ENCODE measurements at regions of chr1 and their contacts with region 1.

Region 1: DNA sequence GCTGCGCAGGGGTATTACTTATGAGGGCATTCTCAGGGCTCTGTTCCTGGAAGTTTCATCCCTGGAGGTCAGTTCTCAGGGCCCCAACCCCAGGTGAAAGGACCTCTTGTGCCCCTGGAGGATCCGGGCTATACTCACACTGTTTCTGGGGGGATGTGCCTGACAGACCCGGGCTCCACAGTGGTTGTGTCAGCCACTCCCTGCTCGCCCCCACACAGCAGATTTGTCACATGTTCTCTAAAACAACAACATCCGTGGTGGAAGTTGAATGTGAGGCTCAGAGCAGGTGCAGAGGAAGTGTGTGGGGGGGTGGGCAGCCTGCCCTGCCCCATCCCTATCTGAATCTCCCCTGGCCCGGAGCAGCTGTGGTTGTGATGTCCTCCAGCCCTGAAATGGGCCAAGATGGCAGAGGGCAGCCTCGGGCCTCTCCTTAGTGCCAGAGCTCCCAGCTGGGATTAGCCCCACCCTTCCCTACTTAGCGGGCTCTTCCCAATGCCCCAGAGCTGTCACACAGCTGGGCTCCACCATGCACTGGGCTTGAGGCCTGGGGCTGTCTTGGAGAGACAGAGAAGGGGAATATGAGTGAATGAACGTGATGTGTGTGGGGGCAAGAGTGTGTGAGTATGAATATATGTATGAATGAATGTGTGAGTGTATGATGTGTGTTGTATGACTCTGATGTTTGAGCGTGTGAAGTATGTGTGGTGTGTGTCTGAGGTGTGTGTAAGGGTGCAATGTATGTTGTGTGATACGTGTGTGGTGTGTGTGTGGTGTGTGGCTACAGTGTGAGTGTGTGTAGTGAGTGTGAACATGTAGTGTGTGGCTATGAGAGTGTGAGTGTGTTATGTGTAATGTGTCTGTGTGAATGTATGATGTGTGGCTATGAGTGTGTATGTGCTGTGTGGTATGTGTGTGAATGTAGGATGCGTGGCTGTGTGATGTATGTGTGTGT is 1.5 kb upstream of the FCMR start:
- DNase-seq: peak; percentile 49
- H3K4me3 Mint-ChIP-seq: no peak overlapping the region
- H3K27ac Mint-ChIP-seq: no peak overlapping the region
- H3K4me1 Mint-ChIP-seq: peaks cover 30% of the 10 kb centered on the region
- H3K27me3 Mint-ChIP-seq: no peaks in the 10 kb centered on the region

Region 2: DNA sequence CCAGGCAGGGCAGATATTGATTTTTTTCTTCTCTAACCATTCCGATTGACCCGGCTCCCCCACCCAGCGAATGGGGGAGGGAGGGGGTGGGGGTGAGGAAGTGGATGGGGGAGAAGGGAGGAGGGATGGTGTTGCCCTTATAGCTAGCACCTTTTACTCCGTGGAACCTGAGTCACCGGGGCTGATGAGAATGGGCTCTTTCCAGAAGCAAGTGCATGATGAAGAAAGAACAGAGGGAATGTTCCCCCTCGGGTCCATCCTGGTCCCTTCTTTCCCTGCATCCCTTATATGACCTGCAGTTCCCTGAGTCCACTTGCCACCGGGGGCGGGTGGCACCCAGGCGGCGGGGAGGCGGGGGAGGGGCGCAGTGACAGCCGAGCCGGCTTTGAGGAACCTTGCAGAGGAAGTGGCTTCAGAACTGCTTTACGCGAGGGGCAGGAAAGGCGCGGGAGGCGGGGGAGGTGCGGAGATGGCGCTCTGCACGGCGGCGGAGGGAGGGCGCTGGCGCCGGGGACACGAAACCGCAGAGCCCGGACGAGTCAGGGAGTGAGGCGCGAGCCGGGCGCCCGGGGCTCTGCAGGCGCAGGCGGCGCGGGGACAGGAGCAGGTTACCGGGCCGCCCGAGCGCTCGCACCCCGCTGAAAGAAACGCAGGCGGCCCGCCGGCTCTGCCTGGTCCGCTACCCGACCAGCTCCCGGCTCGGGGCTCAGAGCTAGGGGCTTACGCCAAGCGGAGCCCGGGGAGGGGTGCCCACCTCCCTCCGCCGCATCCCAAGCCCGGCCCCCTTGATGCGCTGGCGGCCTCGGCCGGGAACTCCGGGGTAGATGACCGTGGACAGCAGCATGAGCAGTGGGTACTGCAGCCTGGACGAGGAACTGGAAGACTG is 366.3 kb before region 1 on chr1:
- intact Hi-C with region 1: no loop called
- DNase-seq: peak; percentile 89
- H3K4me3 Mint-ChIP-seq: peak overlapping the region; percentile 97
- H3K27ac Mint-ChIP-seq: peak overlapping the region; percentile 95
- H3K4me1 Mint-ChIP-seq: peaks cover 65% of the 10 kb centered on the region
- H3K27me3 Mint-ChIP-seq: no peaks in the 10 kb centered on the region

Region 3: DNA sequence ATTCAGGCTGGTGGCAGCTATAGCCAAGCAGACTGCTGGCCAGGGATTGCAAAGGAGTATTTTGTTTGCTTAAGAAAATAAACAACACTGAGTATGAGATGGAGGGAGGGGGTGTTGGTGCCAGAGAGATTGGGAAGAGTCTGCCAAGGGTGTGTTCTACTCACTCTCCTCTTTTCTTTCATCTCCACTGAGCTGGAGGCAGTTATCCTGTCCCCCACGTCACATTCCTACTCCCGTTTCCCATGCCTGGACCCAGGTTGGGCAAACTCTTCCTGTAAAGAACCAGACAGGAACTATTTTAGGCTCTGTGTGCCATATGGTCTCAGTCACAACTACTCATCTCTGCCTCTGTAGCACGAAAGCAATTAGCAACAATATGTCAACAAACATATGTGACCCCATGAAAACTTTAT is 27.4 kb before region 1 on chr1:
- intact Hi-C with region 1: loop called (anchors 2 kb)
- DNase-seq: no peak
- H3K4me3 Mint-ChIP-seq: no peak overlapping the region
- H3K27ac Mint-ChIP-seq: no peak overlapping the region
- H3K4me1 Mint-ChIP-seq: peaks cover 56% of the 10 kb centered on the region
- H3K27me3 Mint-ChIP-seq: no peaks in the 10 kb centered on the region